Psoas muscle (tissue), 8 donors: ENCODE measurements at regions of chr9 and their contacts with region 1.

Region 1: DNA sequence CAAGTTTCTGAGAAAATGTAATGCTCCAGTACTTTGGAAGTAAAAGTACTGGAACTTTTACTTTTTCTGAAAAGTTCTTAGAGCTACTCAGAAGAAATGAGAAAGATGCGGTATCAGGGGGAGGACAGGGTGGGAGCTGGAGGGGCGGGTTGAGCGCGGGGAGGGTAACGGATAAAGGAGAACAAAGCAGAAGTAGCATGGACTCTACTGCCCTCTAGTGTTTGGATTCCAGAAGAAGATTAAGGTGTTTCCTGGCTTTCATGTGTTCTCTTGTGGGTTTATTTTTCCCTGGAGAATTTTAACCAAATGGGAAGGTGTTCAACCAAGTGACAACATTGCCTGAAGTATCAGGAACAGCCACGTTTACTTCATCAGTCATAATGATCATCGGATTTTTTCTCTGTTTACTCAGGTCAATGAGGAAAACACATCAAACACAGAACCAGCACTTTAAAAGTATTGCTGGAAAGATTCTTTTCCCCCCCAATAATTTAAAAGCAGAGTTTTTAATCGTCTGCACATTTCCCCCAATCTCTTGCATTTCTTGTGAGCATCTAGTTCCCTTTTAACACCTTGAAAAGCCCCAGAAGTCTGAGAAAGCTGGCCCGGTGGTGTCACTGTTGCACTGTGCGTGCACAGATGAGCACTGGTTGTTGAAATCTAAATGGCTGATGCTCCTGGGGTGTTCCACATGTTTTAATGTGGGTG is 190.6 kb downstream of the MPDZ start:
- DNase-seq: no peak
- ATAC-seq: peak in 3 of 4 donors; percentile 45 to 74 (median 61)
- H3K4me3 ChIP-seq: no peak overlapping the region
- H3K27ac ChIP-seq: no peak overlapping the region
- H3K4me1 ChIP-seq: no peaks in the 10 kb centered on the region
- H3K27me3 ChIP-seq: no peaks in the 10 kb centered on the region
- CTCF ChIP-seq: peak; percentile 77

Region 2: DNA sequence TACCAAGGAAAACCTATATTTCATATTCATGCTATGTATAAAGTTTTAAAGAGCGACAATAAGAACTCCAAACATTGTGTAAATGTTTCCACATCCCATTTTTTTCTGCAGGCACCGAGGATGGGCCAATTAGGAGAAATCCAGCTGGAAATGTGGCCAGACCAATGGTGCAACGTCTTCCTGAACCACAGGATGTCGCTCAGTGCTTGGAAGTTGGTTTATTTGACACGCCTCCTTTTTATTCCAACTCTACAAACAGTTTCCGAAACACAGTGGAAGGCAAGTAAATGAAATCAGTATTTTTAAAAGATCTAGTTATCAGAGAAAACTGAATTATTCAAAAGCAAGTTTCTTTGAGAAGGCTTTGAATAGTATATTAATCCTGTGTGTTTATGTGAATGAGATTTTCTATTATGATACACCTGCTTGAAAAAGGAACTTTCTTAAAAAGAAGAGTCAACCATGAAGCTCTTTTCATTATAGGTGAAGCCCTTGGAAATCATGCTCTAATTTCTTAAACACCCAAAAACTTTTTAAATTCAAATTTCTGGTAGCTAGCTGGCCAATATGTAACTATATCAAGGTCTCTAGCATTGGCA is 386.6 kb before region 1 on chr9:
- intact Hi-C with region 1: loop called in 1 of 2 experiments (anchors 5 kb)
- DNase-seq: peak; percentile 28 to 46
- ATAC-seq: peak in 3 of 4 donors; percentile 46 to 76 (median 70)
- H3K4me3 ChIP-seq: no peak overlapping the region
- H3K27ac ChIP-seq: no peak overlapping the region
- H3K4me1 ChIP-seq: no peaks in the 10 kb centered on the region
- H3K27me3 ChIP-seq: no peaks in the 10 kb centered on the region
- CTCF ChIP-seq: peak; percentile 48

Region 3: GRCh38 chr9:12719431-12719830 is 369.4 kb before region 1 on chr9:
- intact Hi-C with region 1: loop called (anchors 5 kb)
- DNase-seq: no peak
- ATAC-seq: peak in 3 of 4 donors; percentile 25 to 61 (median 43)
- H3K4me3 ChIP-seq: no peak overlapping the region
- H3K27ac ChIP-seq: no peak overlapping the region
- H3K4me1 ChIP-seq: no peaks in the 10 kb centered on the region
- H3K27me3 ChIP-seq: no peaks in the 10 kb centered on the region
- CTCF ChIP-seq: peak; percentile 48

Region 4: DNA sequence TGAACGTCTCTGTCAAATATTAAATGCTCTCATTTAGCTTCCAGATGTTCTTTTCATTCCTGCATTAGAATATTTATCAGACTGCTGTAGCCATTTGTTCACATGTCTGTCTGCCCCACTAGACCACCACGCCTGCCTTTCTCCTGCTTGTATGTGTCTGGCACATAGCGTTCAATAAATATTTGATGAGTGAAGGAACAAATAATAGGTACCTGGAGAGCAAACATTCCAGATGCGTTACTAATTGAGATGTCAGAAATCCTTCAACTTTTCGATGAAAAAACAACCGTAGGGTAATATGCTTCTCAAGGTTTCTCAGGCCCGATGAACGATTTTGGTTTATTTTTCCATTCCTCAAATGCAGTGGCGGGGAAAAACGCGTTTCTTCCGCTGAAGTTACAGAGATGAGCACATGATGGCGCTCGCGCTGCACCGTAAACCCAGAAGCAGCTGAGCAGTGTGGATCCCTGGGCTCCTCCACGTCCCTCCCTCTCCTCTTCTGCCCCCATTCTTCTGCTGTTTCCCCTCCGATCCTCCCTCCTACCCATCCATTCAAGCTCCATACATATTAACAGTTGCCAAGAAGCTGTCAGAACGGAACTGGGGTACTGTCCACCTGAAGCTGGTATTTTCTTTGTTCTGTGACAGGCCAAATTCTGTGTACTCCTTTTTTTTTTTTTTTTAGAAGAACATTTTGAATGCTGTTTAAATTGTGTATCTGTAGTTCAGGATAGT is 54.7 kb before region 1 on chr9:
- intact Hi-C with region 1: loop called (anchors 5 kb)
- DNase-seq: peak; percentile 44 to 66
- ATAC-seq: peak; percentile 73 to 88 (median 86)
- H3K4me3 ChIP-seq: peak overlapping the region; percentile 31
- H3K27ac ChIP-seq: no peak overlapping the region
- H3K4me1 ChIP-seq: no peaks in the 10 kb centered on the region
- H3K27me3 ChIP-seq: no peaks in the 10 kb centered on the region
- CTCF ChIP-seq: peak; percentile 75